SK-N-SH (cell line): ENCODE measurements at regions of chr17 and their contacts with region 1.

Region 1: GRCh38 chr17:49496183-49496866 is 1.2 kb downstream of the NGFR start:
- DNase-seq: peak; percentile 96
- H3K4me3 ChIP-seq: peak overlapping the region; percentile 54 to 63
- H3K27ac ChIP-seq: no peak overlapping the region; a peak in 1 of 4 replicates
- H3K4me1 ChIP-seq: peaks cover 5 to 42% of the 10 kb centered on the region in 2 experiments; a peak in 2 of 4 replicates
- H3K27me3 ChIP-seq: peaks cover 80% of the 10 kb centered on the region
- CTCF ChIP-seq: peak; percentile 81
- EP300 ChIP-seq: no peak
- RAD21 ChIP-seq: peak; percentile 73

Region 2: GRCh38 chr17:49260011-49260921 is 236.1 kb before region 1 on chr17:
- CTCF ChIA-PET with region 1: no interaction called
- POLR2A ChIA-PET with region 1: no interaction called
- DNase-seq: peak; percentile 81
- H3K4me3 ChIP-seq: peak overlapping the region; percentile 49 to 58
- H3K27ac ChIP-seq: peak overlapping the region in 1 of 2 experiments; percentile 46; a peak in 2 of 4 replicates
- H3K4me1 ChIP-seq: peaks cover 4% of the 10 kb centered on the region in 2 experiments; a peak in 1 of 4 replicates
- H3K27me3 ChIP-seq: no peaks in the 10 kb centered on the region
- CTCF ChIP-seq: no peak
- EP300 ChIP-seq: no peak
- RAD21 ChIP-seq: no peak

Region 3: DNA sequence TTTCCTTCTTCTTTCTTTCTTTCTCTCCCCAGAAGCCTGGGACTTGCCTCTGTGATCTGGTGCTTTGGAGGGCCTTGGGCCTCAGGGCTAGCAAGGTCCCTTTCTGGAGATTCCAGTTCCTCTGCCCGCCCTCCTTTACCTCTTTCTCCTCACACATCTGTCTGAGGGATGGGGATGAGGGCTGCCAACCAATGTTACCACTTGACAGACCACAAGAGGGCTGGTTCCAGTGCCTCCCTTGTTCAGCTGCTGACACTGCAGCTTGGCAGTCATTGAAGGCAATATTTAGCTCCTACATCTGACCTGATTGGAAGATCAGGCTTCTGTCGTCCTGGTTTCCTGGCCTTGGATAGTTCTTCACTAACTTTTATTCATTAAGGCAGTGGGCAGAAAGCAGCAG is 130.7 kb before region 1 on chr17:
- CTCF ChIA-PET with region 1: no interaction called
- POLR2A ChIA-PET with region 1: no interaction called
- DNase-seq: peak; percentile 57
- H3K4me3 ChIP-seq: no peak overlapping the region
- H3K27ac ChIP-seq: no peak overlapping the region
- H3K4me1 ChIP-seq: peaks cover 0 to 6% of the 10 kb centered on the region in 2 experiments; a peak in 1 of 4 replicates
- H3K27me3 ChIP-seq: no peaks in the 10 kb centered on the region
- CTCF ChIP-seq: peak; percentile 37; the same call in 1 of the 2 replicates
- EP300 ChIP-seq: no peak
- RAD21 ChIP-seq: peak; percentile 36; the same call in 1 of the 2 replicates

Region 4: GRCh38 chr17:49399995-49400394 is 96.3 kb before region 1 on chr17:
- CTCF ChIA-PET with region 1: interaction called, 18 read pairs
- POLR2A ChIA-PET with region 1: no interaction called
- DNase-seq: no peak
- H3K4me3 ChIP-seq: no peak overlapping the region
- H3K27ac ChIP-seq: no peak overlapping the region
- H3K4me1 ChIP-seq: no peaks in the 10 kb centered on the region
- H3K27me3 ChIP-seq: no peaks in the 10 kb centered on the region
- CTCF ChIP-seq: no peak
- EP300 ChIP-seq: no peak
- RAD21 ChIP-seq: no peak

Region 5: GRCh38 chr17:49443862-49444261 is 52.5 kb before region 1 on chr17:
- CTCF ChIA-PET with region 1: interaction called, 128 read pairs
- POLR2A ChIA-PET with region 1: no interaction called
- DNase-seq: no peak
- H3K4me3 ChIP-seq: no peak overlapping the region
- H3K27ac ChIP-seq: no peak overlapping the region
- H3K4me1 ChIP-seq: peaks cover 14 to 22% of the 10 kb centered on the region in 2 experiments; a peak in 3 of 4 replicates
- H3K27me3 ChIP-seq: peaks cover 4% of the 10 kb centered on the region; the same call in 1 of the 2 replicates
- CTCF ChIP-seq: no peak
- EP300 ChIP-seq: peak in 1 of 2 experiments; percentile 80; a peak in 1 of 4 replicates
- RAD21 ChIP-seq: no peak

Region 6: GRCh38 chr17:49471089-49471683 is 25.1 kb before region 1 on chr17:
- CTCF ChIA-PET with region 1: interaction called, 179 read pairs
- POLR2A ChIA-PET with region 1: interaction called, 3 read pairs
- DNase-seq: peak; percentile 87
- H3K4me3 ChIP-seq: no peak overlapping the region
- H3K27ac ChIP-seq: peak overlapping the region in 1 of 2 experiments; percentile 82; a peak in 2 of 4 replicates
- H3K4me1 ChIP-seq: peaks cover 0 to 32% of the 10 kb centered on the region in 2 experiments; a peak in 1 of 4 replicates
- H3K27me3 ChIP-seq: peaks cover 68% of the 10 kb centered on the region
- CTCF ChIP-seq: no peak
- EP300 ChIP-seq: no peak
- RAD21 ChIP-seq: peak; percentile 44

Region 7: DNA sequence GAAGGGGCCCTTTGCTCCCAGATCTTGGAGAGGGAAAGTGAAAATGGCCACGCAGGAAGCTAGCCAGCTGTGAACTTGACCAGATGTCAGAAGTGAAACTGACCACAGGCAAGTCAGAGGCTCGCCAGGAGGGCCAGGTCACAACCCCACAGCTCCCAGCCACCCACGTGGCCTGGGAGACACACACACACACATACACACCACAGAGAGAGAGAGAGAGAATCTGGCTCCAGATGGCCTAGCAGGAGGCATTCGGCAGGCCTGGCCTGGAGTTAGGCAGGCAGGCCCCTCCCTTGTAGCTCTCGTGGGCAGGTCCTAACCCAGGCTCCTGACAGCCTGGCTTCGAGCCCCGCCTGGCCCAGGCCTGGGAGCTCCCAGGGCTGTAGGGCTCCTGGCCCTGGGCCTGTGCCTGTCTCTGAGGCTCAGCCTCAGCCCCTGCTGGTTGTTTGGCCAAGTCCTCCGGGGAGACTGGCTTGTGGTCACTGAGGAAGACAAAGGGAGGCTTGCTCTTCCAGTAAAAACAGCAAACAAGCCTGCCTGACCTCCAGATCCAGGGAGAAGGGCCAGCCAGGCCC is 19.0 kb after region 1 on chr17:
- CTCF ChIA-PET with region 1: interaction called, 453 read pairs
- POLR2A ChIA-PET with region 1: interaction called, 8 read pairs
- DNase-seq: peak; percentile 97
- H3K4me3 ChIP-seq: no peak overlapping the region
- H3K27ac ChIP-seq: peak overlapping the region; percentile 15 to 99; a peak in 3 of 4 replicates
- H3K4me1 ChIP-seq: peaks cover 7 to 76% of the 10 kb centered on the region in 2 experiments
- H3K27me3 ChIP-seq: peaks cover 2% of the 10 kb centered on the region; the same call in 1 of the 2 replicates
- CTCF ChIP-seq: no peak
- EP300 ChIP-seq: peak in 1 of 2 experiments; percentile 94; a peak in 2 of 4 replicates
- RAD21 ChIP-seq: peak; percentile 46; the same call in 1 of the 2 replicates

Region 8: DNA sequence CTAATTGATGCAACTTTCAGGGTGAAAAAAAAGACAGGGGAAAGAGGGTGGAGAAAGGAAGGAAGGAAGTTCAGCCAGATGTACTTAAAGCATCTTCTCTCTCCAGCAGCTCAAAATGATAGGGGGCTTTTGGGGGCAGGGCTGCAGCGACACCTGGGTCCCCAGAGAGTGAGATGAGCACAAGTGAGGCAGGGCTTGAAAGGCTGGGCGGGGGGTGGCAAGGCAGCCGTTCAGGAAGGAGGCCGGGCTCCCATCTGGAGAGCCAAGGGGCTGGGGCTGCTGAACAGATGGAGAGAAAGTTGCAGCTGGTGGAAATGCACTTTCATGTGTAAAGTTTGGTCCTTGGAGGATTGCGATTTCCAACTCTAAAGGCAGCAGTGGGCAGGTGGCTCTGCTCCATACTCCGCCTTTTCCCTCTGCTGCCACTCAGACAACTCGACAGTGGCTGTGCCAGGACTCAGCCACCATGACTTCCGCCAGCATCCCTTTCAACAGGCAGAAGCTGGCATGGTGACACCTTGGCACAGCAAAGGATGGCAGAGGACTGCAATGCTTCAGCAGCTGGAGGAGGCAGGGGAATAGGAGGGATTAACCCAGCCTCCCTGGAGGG is 203.7 kb after region 1 on chr17:
- CTCF ChIA-PET with region 1: interaction called, 15 read pairs
- POLR2A ChIA-PET with region 1: no interaction called
- DNase-seq: no peak
- H3K4me3 ChIP-seq: no peak overlapping the region
- H3K27ac ChIP-seq: no peak overlapping the region
- H3K4me1 ChIP-seq: peaks cover 0 to 1% of the 10 kb centered on the region in 2 experiments; a peak in 1 of 4 replicates
- H3K27me3 ChIP-seq: no peaks in the 10 kb centered on the region
- CTCF ChIP-seq: no peak
- EP300 ChIP-seq: no peak
- RAD21 ChIP-seq: no peak